MCF 10A (cell line): ENCODE measurements at regions of chr14 and their contacts with region 1.

Region 1: DNA sequence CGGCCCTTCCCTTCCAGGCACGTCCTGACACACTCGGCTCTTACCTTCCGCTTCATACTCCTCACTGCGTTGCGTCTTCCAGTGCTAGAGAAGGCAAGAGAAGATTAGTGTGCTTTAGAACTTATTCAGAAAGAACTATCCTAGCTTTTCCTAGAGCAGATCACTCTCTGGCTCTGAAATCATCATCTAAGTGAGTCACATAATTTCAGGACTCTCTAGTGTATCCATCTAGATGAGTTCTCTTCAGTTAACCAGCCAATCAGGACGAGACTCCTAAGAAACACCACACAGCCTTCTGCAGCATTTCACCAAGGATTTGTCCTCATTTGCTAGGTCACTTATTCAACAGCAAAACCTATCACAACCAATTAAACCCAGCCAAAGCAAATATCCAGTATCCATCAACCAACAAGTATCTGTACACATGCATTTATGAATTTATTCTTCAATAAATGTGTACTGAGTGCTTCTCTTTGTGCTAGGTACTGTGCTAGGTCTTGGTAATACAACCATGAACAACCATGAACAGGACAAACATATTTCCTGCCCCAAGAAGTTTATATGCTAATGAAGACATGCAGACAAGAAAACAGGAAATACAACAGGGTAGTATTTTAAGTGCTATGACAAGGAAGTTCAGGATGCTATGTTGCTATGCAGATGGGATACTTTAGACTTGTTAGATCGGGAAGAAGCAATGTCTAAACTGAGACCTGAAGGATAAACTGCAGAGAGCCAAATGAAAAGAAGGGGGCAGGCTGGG is 52.1 kb downstream of the NIN start:
- DNase-seq: no peak
- H3K4me3 Mint-ChIP-seq: no peak overlapping the region
- H3K27ac Mint-ChIP-seq: peak overlapping the region; percentile 22
- H3K4me1 Mint-ChIP-seq: peaks cover 29% of the 10 kb centered on the region
- H3K27me3 Mint-ChIP-seq: no peaks in the 10 kb centered on the region
- CTCF ChIP-seq: no peak

Region 2: DNA sequence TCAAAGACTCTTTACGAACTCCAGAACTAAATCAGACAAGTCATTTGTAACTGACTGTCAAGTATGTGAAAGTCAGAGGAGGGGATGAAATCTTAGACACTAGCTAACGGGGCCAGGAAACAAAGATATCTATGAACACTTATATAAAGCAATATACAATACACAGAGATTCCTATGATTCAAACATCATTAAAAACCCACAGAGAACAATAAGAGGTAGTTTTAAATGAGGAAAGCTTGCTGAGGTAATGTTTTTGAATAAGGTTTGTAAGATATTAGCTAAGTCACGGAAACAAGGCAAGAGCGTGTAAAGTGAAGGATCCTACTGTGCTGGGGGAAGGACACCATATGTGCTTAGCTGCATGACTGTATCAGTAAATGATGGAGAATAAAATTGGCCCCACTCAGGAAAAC is 147.5 kb before region 1 on chr14:
- CTCF ChIA-PET with region 1: interaction called, 15 read pairs
- POLR2A ChIA-PET with region 1: interaction called, 3 read pairs
- intact Hi-C with region 1: no loop called
- DNase-seq: no peak
- H3K4me3 Mint-ChIP-seq: no peak overlapping the region
- H3K27ac Mint-ChIP-seq: no peak overlapping the region
- H3K4me1 Mint-ChIP-seq: no peaks in the 10 kb centered on the region
- H3K27me3 Mint-ChIP-seq: no peaks in the 10 kb centered on the region
- CTCF ChIP-seq: no peak

Region 3: DNA sequence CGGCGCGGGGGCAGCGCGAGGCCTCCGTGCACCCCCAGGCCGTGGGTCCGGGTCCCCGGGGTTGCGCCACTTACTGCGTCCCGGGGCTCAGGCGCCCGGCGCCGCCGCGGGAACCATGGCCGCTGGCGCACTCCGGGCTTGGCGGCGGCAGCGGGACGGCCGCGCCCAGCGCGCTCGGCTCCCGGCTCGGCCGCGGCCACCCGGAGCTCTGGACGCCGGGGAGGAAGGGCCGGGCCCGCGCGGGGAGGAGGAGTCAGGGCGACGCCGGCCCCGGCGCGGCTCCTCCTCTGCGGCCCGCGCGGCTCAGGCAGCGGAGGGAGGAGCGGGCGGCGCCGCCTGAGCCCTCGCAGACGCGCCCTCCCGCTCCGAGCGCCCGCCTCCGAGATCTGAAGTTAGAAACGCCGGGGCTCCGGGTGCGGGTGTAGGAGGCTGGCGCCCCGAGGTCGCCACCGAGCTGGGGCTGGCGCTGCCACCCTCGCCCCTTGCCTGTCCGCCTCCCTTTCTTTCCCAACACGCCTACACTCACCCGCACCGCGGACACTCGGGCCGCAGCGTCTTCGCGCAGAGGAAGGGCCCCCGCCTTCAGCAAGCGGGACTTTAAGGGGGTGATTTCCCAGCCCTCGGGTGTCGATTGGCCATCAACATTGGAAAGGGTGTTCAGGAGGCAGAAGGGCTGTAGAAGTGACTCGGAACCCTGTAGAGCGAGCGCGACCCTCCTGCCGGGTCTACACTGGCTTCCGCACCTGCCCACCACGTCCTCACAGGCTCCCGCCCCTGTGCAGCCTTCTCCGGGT is 52.2 kb after region 1 on chr14 and contains the start of gene NIN:
- CTCF ChIA-PET with region 1: interaction called, 19 read pairs
- POLR2A ChIA-PET with region 1: interaction called, 6 read pairs
- intact Hi-C with region 1: no loop called
- DNase-seq: peak; percentile 80
- H3K4me3 Mint-ChIP-seq: peak within 1 kb of the TSS; percentile 75
- H3K27ac Mint-ChIP-seq: peak within 1 kb of the TSS; percentile 20
- H3K4me1 Mint-ChIP-seq: peaks cover 21% of the 10 kb centered on the region
- H3K27me3 Mint-ChIP-seq: no peaks in the 10 kb centered on the region
- CTCF ChIP-seq: no peak
- total RNA-seq, gene NIN: 29.2 and 33.0 TPM in 2 replicates